K562 (cell line): ENCODE measurements at regions of chr13 and their contacts with region 1.

Region 1: GRCh38 chr13:113208424-113209335 is at the start of gene PCID2:
- DNase-seq: peak; percentile 73 to 90 (median 80)
- ATAC-seq: peak; percentile 79
- H3K4me3 ChIP-seq: peak within 1 kb of the TSS; percentile 95
- H3K27ac ChIP-seq: peak within 1 kb of the TSS; percentile 98
- H3K4me1 ChIP-seq: peaks cover 26 to 29% of the 10 kb centered on the region in 2 experiments; a peak in 4 of 5 replicates
- H3K27me3 ChIP-seq: no peaks in the 10 kb centered on the region
- CTCF ChIP-seq: no peak
- EP300 ChIP-seq: no peak
- POLR2A ChIP-seq: peak; percentile 88
- RAD21 ChIP-seq: no peak
- polyA plus RNA-seq, gene PCID2: 67.8 to 87.4 TPM

Region 2: GRCh38 chr13:113220877-113221276 is 12.2 kb after region 1 on chr13:
- CTCF ChIA-PET with region 1: no interaction called
- POLR2A ChIA-PET with region 1: interaction called, 11 read pairs
- in situ Hi-C with region 1: no loop called
- intact Hi-C with region 1: loop called (anchors 1 kb)
- DNase-seq: no peak
- ATAC-seq: no peak
- H3K4me3 ChIP-seq: no peak overlapping the region
- H3K27ac ChIP-seq: 0 out of 3 replicates have a peak overlapping the region, but pooled peaks have one; percentile 85
- H3K4me1 ChIP-seq: peaks cover 35 to 43% of the 10 kb centered on the region in 2 experiments
- H3K27me3 ChIP-seq: no peaks in the 10 kb centered on the region
- CTCF ChIP-seq: peak in 2 of 3 experiments; percentile 14 to 16; a peak in 2 of 6 replicates
- EP300 ChIP-seq: no peak
- POLR2A ChIP-seq: no peak
- RAD21 ChIP-seq: no peak

Region 3: GRCh38 chr13:113393563-113394338 is 185.1 kb after region 1 on chr13:
- CTCF ChIA-PET with region 1: no interaction called
- POLR2A ChIA-PET with region 1: no interaction called
- in situ Hi-C with region 1: no loop called
- intact Hi-C with region 1: loop called (anchors 10 kb)
- DNase-seq: peak; percentile 78 to 85 (median 82)
- ATAC-seq: peak; percentile 97
- H3K4me3 ChIP-seq: peak overlapping the region; percentile 41
- H3K27ac ChIP-seq: no peak overlapping the region
- H3K4me1 ChIP-seq: peaks cover 0 to 18% of the 10 kb centered on the region in 2 experiments; a peak in 3 of 5 replicates
- H3K27me3 ChIP-seq: peaks cover 0 to 27% of the 10 kb centered on the region in 2 experiments; a peak in 2 of 5 replicates
- CTCF ChIP-seq: peak; percentile 41 to 92 (median 69)
- EP300 ChIP-seq: no peak
- POLR2A ChIP-seq: no peak
- RAD21 ChIP-seq: peak; percentile 56 to 76; a peak in 3 of 4 replicates